GM10248 (cell line): ENCODE measurements at regions of chr17 and their contacts with region 1.

Region 1: DNA sequence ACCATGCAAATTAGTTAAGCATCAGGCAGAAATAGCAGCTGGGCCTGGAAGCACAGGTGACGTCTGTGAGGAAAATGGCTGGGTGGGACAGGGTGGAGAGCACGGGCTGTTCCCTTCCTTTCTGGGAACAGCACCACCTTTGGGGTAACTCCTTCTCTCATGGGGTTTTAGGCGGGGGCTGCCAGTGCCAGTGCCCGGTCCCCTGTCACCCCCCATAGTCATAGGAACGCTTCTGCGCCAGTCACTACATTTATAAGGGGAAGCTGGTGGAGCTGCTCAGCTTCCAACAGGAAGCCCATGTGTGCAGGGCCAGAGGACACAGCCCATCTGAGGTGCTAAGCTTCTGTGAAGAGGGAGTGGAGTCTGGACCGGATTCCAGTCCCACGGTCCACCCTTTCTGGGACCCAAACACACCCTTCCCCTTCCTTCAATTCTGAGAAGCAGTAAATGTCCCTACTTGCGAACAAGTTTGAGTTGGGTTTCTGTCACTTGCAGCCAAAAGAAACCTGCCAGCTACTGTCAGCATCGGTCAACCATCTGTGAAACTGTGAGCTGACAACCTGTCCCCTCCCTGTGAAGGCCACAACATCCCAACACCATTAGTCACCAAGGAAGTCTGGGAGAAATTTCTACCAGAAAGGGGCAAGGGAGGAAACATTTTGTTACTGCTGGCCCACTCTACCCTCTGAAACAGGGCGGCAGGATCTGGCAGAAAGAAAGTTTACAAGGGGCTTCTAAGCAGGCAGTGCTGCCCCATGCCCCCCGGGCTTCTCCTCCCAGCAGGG is 86.0 kb upstream of the AMZ2 start:
- DNase-seq: no peak
- CTCF ChIP-seq: no peak

Region 2: GRCh38 chr17:67353929-67354574 is 807.8 kb before region 1 on chr17:
- CTCF ChIA-PET with region 1: no interaction called
- POLR2A ChIA-PET with region 1: interaction called, 11 read pairs
- DNase-seq: no peak
- CTCF ChIP-seq: no peak

Region 3: DNA sequence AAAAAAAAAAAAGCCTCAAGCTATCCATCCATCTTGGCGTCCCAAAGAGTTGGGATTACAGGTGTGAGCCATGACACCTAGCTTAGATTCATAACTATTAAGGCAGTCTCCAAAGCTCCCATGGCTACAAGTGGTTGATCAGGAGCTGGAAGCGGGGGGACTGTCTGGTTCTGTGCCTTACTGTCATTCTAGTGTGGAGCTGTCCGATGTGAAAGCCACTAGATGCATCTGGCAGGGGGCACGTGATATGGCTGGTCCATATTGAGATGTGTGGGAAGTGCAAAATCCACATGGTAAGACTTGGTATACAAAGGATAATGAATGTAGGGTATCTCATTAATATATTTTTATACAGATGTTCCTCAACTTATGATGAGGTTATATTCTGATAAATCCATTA is 87.6 kb before region 1 on chr17:
- CTCF ChIA-PET with region 1: no interaction called
- POLR2A ChIA-PET with region 1: no interaction called
- DNase-seq: no peak
- CTCF ChIP-seq: no peak

Region 4: GRCh38 chr17:68102318-68102758 is 59.5 kb before region 1 on chr17:
- CTCF ChIA-PET with region 1: no interaction called
- POLR2A ChIA-PET with region 1: no interaction called
- DNase-seq: no peak
- CTCF ChIP-seq: no peak

Region 5: DNA sequence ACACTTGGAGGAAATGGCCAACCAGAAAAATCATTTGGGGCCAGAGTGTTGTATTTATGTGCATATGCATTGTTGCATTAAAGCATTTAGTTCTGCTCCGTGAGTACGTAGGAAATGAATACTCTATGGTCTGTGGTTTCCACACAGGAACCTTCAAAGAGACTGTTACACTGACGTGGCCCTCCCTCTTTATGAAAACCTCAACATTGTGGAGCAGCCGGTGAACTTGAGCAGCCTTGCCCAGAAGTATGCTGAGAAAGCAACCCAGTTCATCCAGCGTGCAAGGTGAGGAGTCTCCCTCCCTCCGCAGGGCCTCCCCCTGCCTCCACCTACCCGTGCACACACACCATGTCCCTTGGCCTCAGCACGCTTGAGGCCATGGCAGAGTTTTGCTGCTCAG is 194.7 kb after region 1 on chr17:
- CTCF ChIA-PET with region 1: no interaction called
- POLR2A ChIA-PET with region 1: no interaction called
- DNase-seq: peak; percentile 50
- CTCF ChIP-seq: no peak